Mammary epithelial cell (primary cell): ENCODE measurements at regions of chr6 and their contacts with region 1.

Region 1: DNA sequence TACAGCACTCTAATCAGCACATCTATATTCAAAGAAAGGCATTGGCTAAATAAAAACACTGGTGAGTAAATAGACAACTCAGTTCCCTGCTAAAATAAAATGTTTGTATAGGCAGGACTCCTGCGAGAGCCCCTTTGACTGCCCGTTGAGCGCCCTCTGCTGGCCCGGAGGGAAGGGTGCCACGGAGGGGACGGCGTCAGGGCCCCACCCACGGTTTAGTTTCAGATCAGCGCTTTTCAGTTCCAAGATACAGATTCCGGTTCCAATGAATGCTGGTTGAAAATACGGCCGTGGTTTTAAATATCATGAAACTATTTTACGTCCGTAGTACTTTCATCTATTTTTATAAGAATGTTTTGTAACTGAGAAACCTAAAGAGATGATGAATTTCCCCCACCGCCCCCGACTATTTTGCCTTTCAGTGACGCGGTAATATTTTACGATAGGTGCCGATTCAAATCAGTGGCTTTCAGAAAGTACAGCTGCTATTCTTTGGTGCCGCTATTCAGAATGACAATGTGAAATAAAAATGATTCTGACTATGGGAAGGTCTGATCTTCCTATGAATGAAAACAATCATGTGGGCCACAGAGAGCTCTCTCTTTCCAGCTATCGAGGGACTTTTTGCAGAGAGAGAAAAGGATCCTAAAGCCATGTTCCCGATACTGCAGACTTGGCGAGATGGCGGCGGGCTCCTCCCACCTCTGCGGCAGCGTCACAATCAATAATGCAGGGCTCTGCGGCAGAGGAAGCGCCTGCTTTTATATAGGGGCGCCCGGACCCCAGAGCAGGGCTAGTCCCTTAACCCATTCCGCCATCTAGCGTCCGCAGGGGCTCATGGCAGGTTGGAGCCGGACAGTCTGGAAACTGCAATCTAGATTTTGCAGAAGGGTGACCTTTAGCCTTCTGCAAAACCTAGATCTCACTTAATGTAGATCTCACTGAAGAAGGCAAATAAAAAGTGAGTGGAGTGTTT is 10.6 kb upstream of the CCN6 start:
- DNase-seq: peak; percentile 79
- H3K4me3 ChIP-seq: peak overlapping the region; percentile 70 to 79 (median 71)
- H3K27ac ChIP-seq: peak overlapping the region; percentile 95
- H3K4me1 ChIP-seq: peaks cover 1% of the 10 kb centered on the region
- H3K27me3 ChIP-seq: no peaks in the 10 kb centered on the region
- CTCF ChIP-seq: peak; percentile 96 to 98

Region 2: DNA sequence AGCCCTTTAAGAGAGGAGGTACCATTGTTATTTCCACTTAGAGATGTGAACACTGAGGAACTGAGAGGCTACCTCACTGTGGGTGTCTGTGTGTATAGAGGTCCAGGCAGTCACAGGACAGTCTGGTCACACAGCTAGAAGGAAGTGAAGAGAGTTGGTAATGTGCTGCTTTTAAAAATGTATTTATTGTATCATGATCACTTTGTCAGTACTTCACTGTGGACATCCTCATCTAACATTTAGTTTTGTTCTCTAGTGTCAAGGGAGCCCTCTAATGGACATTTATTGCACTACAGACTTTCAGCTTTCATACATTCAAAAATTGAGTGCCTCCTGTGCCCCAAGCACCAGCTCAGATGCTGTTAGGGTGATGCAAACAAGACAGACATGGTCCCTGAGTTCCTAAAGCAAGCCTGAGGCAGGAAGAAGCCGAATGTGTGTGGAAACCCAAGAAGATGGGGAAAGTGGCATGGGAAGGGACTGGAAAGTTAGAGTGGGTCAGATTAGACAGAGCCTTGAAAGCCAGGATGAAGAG is 833.1 kb before region 1 on chr6:
- CTCF ChIA-PET with region 1: no interaction called
- dilution Hi-C with region 1: no loop called
- in situ Hi-C with region 1: no loop called
- intact Hi-C with region 1: loop called (anchors 1 kb)
- DNase-seq: peak; percentile 57
- H3K4me3 ChIP-seq: no peak overlapping the region
- H3K27ac ChIP-seq: no peak overlapping the region
- H3K4me1 ChIP-seq: no peaks in the 10 kb centered on the region
- H3K27me3 ChIP-seq: no peaks in the 10 kb centered on the region
- CTCF ChIP-seq: peak; percentile 71 to 80

Region 3: GRCh38 chr6:111361648-111362047 is 681.7 kb before region 1 on chr6:
- CTCF ChIA-PET with region 1: no interaction called
- dilution Hi-C with region 1: no loop called
- in situ Hi-C with region 1: no loop called
- intact Hi-C with region 1: loop called (anchors 5 kb)
- DNase-seq: peak; percentile 17
- H3K4me3 ChIP-seq: no peak overlapping the region
- H3K27ac ChIP-seq: no peak overlapping the region
- H3K4me1 ChIP-seq: no peaks in the 10 kb centered on the region
- H3K27me3 ChIP-seq: no peaks in the 10 kb centered on the region
- CTCF ChIP-seq: peak; percentile 13 to 55

Region 4: GRCh38 chr6:111573892-111574797 is 469.2 kb before region 1 on chr6:
- CTCF ChIA-PET with region 1: no interaction called
- dilution Hi-C with region 1: no loop called
- in situ Hi-C with region 1: no loop called
- intact Hi-C with region 1: loop called (anchors 5 kb)
- DNase-seq: peak; percentile 80
- H3K4me3 ChIP-seq: no peak overlapping the region
- H3K27ac ChIP-seq: peak overlapping the region; percentile 66
- H3K4me1 ChIP-seq: peaks cover 36% of the 10 kb centered on the region
- H3K27me3 ChIP-seq: no peaks in the 10 kb centered on the region
- CTCF ChIP-seq: no peak

Region 5: DNA sequence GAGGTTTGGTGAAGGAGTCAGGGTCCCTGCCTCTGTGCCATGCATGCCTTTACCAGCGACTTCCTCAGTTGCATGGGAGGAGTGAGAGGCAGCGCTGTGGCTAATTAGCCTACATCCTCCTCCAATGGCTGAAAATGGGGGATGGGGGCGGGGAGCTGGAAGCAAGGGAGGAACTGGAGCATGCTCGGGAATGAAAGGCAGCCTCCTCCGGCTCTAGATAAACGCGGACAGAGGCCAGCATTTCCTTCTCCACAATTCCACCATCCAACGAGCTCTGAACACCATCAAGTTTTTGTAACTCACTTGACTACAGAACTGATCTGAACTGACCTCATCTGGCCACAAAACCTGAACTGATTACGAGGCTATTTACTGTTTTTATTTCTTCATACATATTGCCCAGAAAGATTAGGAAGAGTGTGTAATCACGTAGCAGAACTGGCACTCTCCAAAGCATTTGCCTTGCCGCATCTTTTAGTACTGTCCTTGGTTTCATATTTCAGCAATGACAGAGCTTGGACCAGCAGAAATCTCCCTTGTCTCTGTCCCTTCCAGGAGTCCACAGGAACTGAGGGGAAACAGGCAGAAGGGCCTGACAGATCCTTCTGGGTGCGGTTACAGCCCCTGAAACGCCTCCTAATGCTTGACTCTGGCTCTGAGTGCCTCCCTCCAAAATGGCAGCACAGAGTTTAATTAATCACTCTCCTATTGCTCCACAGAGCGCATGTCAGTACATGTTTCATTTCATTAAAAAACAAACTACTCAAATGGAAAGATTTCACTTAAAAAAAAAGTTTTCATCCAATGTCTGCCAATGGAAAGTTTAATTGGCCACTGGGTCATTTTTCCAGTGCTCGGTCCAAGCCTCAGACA is 379.4 kb before region 1 on chr6:
- CTCF ChIA-PET with region 1: no interaction called
- dilution Hi-C with region 1: no loop called
- in situ Hi-C with region 1: no loop called
- intact Hi-C with region 1: no loop called
- DNase-seq: no peak
- H3K4me3 ChIP-seq: no peak overlapping the region
- H3K27ac ChIP-seq: no peak overlapping the region
- H3K4me1 ChIP-seq: no peaks in the 10 kb centered on the region
- H3K27me3 ChIP-seq: no peaks in the 10 kb centered on the region
- CTCF ChIP-seq: no peak

Region 6: DNA sequence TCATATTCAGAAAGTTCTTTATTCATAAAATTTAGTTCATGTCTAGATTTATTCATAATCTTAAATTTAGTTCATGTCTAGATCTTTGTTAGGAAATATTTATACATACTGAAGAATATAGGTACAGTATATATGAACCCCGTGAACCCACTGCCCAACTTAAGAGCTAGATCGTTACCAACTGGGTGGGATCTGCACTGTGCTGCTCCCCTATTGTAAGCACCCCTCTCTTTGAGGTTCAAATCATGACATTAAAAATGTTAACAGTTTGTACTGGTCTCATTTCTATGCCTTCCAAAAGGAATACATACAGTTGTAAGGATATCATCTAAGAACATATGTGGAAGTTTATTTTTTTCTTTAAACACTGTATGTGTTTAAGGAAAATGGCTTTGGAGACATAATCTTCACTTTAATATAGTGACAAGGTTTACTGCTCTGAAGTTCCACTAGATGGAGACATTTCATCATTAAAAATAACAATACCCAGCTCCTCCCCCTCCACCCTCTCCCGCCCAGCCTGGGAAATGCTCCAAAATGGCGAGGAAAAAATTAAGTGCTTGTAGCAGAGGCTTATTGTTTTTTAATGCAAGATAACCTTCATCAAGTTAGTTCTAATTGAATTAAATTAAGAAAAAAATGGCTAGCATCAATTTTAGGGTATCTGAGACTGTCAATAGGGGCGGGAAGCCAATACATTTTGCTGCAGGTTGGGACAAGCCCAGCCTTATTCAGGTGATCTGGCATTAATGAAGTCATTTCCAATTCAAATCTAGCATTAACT is 333.5 kb before region 1 on chr6:
- CTCF ChIA-PET with region 1: interaction called, 18 read pairs
- dilution Hi-C with region 1: loop called (anchors 10 kb)
- in situ Hi-C with region 1: loop called in 1 of 2 experiments (anchors 5 kb)
- intact Hi-C with region 1: loop called (anchors 1 kb)
- DNase-seq: peak; percentile 54
- H3K4me3 ChIP-seq: peak overlapping the region in 2 of 3 experiments; percentile 11 to 22
- H3K27ac ChIP-seq: peak overlapping the region; percentile 28
- H3K4me1 ChIP-seq: peaks cover 8% of the 10 kb centered on the region
- H3K27me3 ChIP-seq: no peaks in the 10 kb centered on the region
- CTCF ChIP-seq: peak; percentile 56 to 61

Region 7: GRCh38 chr6:111997078-111997852 is 46.1 kb before region 1 on chr6:
- CTCF ChIA-PET with region 1: no interaction called
- dilution Hi-C with region 1: no loop called
- in situ Hi-C with region 1: no loop called
- intact Hi-C with region 1: loop called (anchors 5 kb)
- DNase-seq: peak; percentile 73
- H3K4me3 ChIP-seq: no peak overlapping the region
- H3K27ac ChIP-seq: no peak overlapping the region
- H3K4me1 ChIP-seq: peaks cover 30% of the 10 kb centered on the region
- H3K27me3 ChIP-seq: no peaks in the 10 kb centered on the region
- CTCF ChIP-seq: peak; percentile 86 to 89

Region 8: DNA sequence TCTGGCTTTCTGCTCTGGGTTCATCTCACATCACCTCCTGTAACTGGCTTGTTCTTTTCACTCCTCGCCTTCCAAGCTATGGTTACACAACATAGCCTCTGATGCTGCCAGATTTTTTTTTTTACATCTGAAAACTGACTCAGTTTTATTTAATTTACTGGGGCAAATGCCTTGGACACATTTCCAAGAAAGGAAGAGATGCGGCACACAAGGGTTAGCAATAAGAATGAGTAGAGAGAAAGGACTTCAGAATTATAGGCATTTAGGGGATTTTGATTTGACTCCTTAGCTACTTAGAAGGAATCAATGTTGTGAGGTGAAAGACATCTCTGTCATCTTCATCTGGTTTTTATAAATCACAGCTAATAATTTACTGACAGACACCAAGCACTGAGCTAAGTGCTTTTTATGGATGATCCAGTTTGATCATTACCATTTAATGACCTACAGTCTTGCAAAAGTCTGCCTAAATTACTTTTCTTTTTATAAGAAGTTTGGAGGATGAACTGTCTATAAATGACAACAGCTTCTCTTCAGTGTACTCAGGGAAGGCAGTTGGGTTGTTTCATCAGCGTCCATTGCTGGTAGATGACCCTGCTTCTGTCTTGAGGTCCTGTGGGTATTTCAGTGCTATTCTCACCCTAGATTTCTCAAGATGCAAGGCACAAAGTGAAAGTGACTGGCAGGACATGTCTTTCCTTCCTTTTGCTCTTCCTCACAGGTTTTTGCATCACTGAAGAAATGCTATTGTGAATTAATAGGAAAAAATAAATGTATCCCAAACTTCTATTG is 179.9 kb after region 1 on chr6:
- CTCF ChIA-PET with region 1: no interaction called
- dilution Hi-C with region 1: no loop called
- in situ Hi-C with region 1: no loop called
- intact Hi-C with region 1: no loop called
- DNase-seq: no peak
- H3K4me3 ChIP-seq: no peak overlapping the region
- H3K27ac ChIP-seq: no peak overlapping the region
- H3K4me1 ChIP-seq: no peaks in the 10 kb centered on the region
- H3K27me3 ChIP-seq: no peaks in the 10 kb centered on the region
- CTCF ChIP-seq: no peak